Adrenal gland (tissue), 19 donors: ENCODE measurements at regions of chr12 and their contacts with region 1.

Region 1: GRCh38 chr12:95815635-95816212 is 25.2 kb upstream of the NTN4 start:
- DNase-seq: no peak
- H3K4me3 ChIP-seq: no peak overlapping the region
- H3K27ac ChIP-seq: no peak overlapping the region
- H3K4me1 ChIP-seq: no peaks in the 10 kb centered on the region
- H3K27me3 ChIP-seq: no peaks in the 10 kb centered on the region
- CTCF ChIP-seq: peak; percentile 61 to 86 (median 80)
- POLR2A ChIP-seq: no peak

Region 2: GRCh38 chr12:95582230-95583058 is 233.3 kb before region 1 on chr12:
- intact Hi-C with region 1: loop called (anchors 5 to 10 kb)
- DNase-seq: no peak
- H3K4me3 ChIP-seq: no peak overlapping the region
- H3K27ac ChIP-seq: no peak overlapping the region
- H3K4me1 ChIP-seq: no peaks in the 10 kb centered on the region
- H3K27me3 ChIP-seq: peaks cover 4% of the 10 kb centered on the region
- CTCF ChIP-seq: peak; percentile 12 to 53 (median 45)
- POLR2A ChIP-seq: no peak

Region 3: DNA sequence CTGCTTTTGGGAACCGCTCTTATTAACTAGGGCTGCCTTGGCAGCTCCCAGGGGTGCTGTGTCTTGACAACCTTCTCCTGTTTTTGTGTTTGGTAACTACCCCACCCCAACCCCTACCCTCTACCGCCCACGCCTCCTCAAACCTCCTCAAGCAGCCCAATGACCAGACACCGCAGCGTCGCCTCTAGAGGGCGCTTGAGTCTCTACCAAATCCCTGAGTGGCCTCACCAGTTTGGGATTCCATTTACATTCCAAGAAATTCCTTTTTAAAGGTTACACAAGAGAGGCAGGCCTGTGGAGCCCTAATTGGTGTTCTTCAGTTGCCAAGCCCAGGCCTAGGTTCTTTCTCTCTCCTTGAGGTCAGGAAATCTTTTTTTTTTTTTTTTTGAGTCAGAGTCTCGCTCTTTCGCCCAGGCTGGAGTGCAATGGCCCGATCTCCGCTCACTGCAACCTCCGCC is 192.1 kb before region 1 on chr12:
- intact Hi-C with region 1: loop called (anchors 5 to 10 kb)
- DNase-seq: peak; percentile 69 to 87 (median 79)
- H3K4me3 ChIP-seq: no peak overlapping the region
- H3K27ac ChIP-seq: peak overlapping the region in 1 of 5 donors; percentile 48
- H3K4me1 ChIP-seq: no peaks in the 10 kb centered on the region
- H3K27me3 ChIP-seq: no peaks in the 10 kb centered on the region
- CTCF ChIP-seq: peak; percentile 65 to 86 (median 74)
- POLR2A ChIP-seq: no peak

Region 4: GRCh38 chr12:95637471-95638155 is 178.1 kb before region 1 on chr12:
- intact Hi-C with region 1: no loop called
- DNase-seq: no peak
- H3K4me3 ChIP-seq: no peak overlapping the region
- H3K27ac ChIP-seq: no peak overlapping the region
- H3K4me1 ChIP-seq: peaks cover 0 to 5% of the 10 kb centered on the region in 2 donors
- H3K27me3 ChIP-seq: no peaks in the 10 kb centered on the region
- CTCF ChIP-seq: no peak
- POLR2A ChIP-seq: no peak

Region 5: DNA sequence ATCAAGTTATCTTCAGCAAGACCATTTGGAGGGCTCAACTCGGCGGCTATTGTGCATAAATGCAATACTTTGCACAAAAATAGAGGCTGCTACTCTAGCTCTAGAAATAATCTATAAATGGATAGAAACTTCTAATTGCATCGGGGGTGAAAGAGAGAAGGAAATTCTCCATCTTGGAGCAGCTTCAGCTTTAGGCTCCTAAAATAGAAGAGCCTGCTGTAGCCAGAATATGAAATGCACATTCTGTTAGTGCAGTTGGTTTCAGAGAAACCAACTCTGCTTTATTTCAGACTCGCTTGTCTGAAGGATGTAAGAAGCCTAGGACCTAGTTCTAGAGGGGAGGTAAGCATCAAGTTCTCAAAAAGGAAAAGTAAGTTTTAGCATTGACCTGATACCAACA is 81.1 kb after region 1 on chr12:
- intact Hi-C with region 1: no loop called
- DNase-seq: no peak
- H3K4me3 ChIP-seq: no peak overlapping the region
- H3K27ac ChIP-seq: no peak overlapping the region
- H3K4me1 ChIP-seq: no peaks in the 10 kb centered on the region
- H3K27me3 ChIP-seq: no peaks in the 10 kb centered on the region
- CTCF ChIP-seq: no peak
- POLR2A ChIP-seq: no peak